Dorsolateral prefrontal cortex (tissue), 120 donors: ENCODE measurements at regions of chr2 and their contacts with region 1.

Region 1: DNA sequence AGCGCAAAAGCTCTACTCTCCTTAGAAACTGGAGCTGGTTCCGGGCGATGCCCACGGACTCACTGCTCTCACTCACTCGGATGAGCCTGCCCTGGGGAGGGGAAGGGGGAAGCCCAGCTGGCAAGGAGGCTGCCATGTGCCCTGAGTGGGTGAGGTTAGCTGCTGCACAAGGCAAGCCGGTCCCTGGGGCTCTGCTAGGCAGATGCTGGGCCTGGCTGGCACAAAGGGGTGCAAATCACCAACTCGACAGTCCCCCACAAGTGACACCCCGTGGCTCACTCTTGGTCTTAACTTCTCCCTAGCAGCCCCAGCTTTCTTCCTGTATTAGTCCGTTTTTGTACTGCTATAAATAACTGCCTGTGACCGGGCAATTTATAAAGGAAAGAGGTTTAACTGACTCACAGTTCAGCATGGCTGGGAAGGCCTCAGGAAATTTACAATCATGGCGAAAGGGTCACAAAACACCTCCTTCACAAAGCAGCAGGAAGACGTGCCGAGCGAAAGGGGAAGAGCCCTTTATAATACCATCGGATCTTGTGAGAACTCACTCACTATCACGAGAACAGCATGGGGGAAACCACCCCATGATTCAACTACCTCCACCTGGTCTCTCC is 33.2 kb downstream of the ADCY3 start:
- DNase-seq: no peak
- H3K4me3 ChIP-seq: peak overlapping the region in 9 of 59 donors; percentile 0 to 31 (median 8)
- H3K27ac ChIP-seq: peak overlapping the region in 31 of 59 donors; percentile 1 to 74 (median 37)
- H3K27me3 ChIP-seq: no peaks in the 10 kb centered on the region
- CTCF ChIP-seq: no peak

Region 2: GRCh38 chr2:24559475-24560109 is 327.2 kb before region 1 on chr2:
- intact Hi-C with region 1: no loop called
- DNase-seq: no peak
- H3K4me3 ChIP-seq: peak overlapping the region in 2 of 59 donors; percentile 18 to 36
- H3K27ac ChIP-seq: peak overlapping the region in 37 of 59 donors; percentile 0 to 77 (median 48)
- H3K27me3 ChIP-seq: no peaks in the 10 kb centered on the region
- CTCF ChIP-seq: no peak

Region 3: GRCh38 chr2:24920098-24920808 is 33.5 kb after region 1 on chr2 and contains the start of gene ADCY3:
- intact Hi-C with region 1: loop called in 1 of 2 experiments (anchors 2 kb)
- DNase-seq: peak in 6 of 10 donors; percentile 56 to 81 (median 64)
- H3K4me3 ChIP-seq: peak within 1 kb of the TSS; percentile 57 to 86 (median 73)
- H3K27ac ChIP-seq: peak within 1 kb of the TSS in 56 of 59 donors; percentile 5 to 88 (median 74)
- H3K27me3 ChIP-seq: no peaks in the 10 kb centered on the region
- CTCF ChIP-seq: no peak
- total RNA-seq, gene ADCY3: 67.4 to 150 (median 95.0) TPM